ENCODE measurements at regions of chr3 and their contacts with region 1.

Region 1: GRCh38 chr3:108221911-108222852 is at the start of gene IFT57:
- DNase-seq: peak; percentile 97
- H3K4me3 Mint-ChIP-seq: peak within 1 kb of the TSS; percentile 100
- H3K27ac Mint-ChIP-seq: peak within 1 kb of the TSS; percentile 100
- H3K4me1 Mint-ChIP-seq: peaks cover 31% of the 10 kb centered on the region
- H3K27me3 Mint-ChIP-seq: no peaks in the 10 kb centered on the region
- CTCF ChIP-seq: no peak
- total RNA-seq, gene IFT57: 38.9 and 46.6 TPM in 2 replicates

Region 2: GRCh38 chr3:108130701-108131474 is 91.3 kb before region 1 on chr3:
- CTCF ChIA-PET with region 1: interaction called, 3 read pairs
- POLR2A ChIA-PET with region 1: interaction called, 11 read pairs
- intact Hi-C with region 1: no loop called
- DNase-seq: peak; percentile 74
- H3K4me3 Mint-ChIP-seq: peak overlapping the region; percentile 7
- H3K27ac Mint-ChIP-seq: peak overlapping the region; percentile 69
- H3K4me1 Mint-ChIP-seq: peaks cover 33% of the 10 kb centered on the region
- H3K27me3 Mint-ChIP-seq: no peaks in the 10 kb centered on the region
- CTCF ChIP-seq: no peak

Region 3: DNA sequence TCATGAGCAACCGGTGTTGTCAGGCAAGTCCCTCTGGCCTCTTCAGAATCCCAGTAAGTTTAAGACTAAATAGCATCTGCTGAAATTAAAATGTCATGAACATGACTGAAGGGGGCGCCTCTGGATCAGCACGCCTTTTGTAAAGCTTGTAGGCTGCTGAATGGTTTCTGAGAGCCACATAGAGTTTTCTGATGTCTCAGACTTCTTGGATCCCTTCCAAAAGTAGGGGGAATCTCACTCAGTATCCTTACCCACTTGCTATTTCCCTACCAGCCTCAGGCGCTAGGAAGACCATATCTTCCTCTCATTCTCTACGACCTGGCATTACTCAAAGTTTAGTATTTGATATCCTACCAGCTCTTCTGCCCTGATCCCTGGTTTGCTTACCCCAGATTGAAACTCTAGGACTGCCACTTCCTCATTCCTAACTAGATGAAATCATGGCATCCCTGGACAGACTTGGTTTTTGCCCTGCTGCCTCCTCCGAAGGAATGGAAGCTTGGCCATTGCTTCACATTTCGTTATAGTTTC is 68.7 kb before region 1 on chr3:
- CTCF ChIA-PET with region 1: no interaction called
- POLR2A ChIA-PET with region 1: no interaction called
- intact Hi-C with region 1: loop called (anchors 2 kb)
- DNase-seq: peak; percentile 78
- H3K4me3 Mint-ChIP-seq: no peak overlapping the region
- H3K27ac Mint-ChIP-seq: no peak overlapping the region
- H3K4me1 Mint-ChIP-seq: no peaks in the 10 kb centered on the region
- H3K27me3 Mint-ChIP-seq: no peaks in the 10 kb centered on the region
- CTCF ChIP-seq: peak; percentile 39

Region 4: DNA sequence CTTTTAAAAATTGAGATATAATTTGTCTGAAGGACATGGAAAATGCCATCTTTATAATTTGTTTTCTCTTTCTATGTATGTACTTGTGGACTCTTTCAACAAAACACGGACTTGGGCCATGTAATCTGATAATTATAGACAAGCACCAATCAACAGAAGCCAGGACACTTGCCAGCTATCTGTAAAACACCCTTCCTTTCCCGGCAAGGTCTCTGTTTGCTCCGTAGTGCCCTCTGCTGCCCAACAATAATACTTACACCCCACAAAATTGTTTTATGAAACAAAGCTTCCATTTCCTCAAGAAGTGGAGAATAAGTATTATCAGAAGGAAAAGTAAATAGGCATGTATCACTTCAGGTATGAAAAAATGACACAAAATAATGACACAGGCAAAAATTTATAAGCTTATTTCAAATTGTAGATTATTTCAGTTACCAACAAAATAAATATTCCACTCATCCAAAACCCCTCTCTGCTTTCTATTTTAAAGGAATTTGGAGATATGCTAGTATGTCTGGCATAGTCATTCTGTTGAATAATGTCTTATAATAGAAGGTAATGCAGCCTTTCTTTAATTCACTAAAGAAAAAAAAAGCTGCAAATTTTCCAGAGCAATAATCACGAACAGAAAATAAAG is 255.4 kb after region 1 on chr3:
- CTCF ChIA-PET with region 1: interaction called, 11 read pairs
- POLR2A ChIA-PET with region 1: interaction called, 5 read pairs
- intact Hi-C with region 1: loop called (anchors 5 kb)
- DNase-seq: peak; percentile 77
- H3K4me3 Mint-ChIP-seq: no peak overlapping the region
- H3K27ac Mint-ChIP-seq: no peak overlapping the region
- H3K4me1 Mint-ChIP-seq: no peaks in the 10 kb centered on the region
- H3K27me3 Mint-ChIP-seq: no peaks in the 10 kb centered on the region
- CTCF ChIP-seq: peak; percentile 62